ENCODE measurements at regions of chr1 and their contacts with region 1.

Region 1: DNA sequence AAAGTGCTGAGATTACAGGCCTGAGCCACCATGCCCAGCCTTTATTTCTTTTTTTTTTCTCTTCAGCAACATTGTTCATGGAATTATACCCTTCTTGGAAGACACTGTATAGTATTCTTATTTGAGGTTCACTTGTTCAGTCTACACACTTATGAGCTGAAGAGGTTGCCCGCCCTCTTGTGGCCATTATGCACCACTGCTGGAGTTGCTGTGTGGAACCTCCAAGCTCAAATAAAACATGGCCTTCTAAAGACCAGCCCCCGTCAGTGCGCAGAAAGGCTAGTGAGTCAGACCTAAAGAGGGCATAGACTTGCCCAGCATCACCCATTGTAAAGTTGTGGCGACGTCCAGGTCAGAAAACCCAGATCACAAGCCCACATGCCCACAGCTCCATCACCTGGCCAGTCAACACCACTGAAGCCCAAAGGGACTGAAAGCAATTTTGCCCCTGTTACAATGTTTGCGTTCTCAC is 20.4 kb downstream of the LURAP1 start:
- DNase-seq: peak; percentile 37 to 84
- ATAC-seq: peak; percentile 90 to 99 (median 97)
- H3K4me3 ChIP-seq: no peak overlapping the region
- H3K4me3 Mint-ChIP-seq: no peak overlapping the region
- H3K27ac ChIP-seq: no peak overlapping the region
- H3K27ac Mint-ChIP-seq: no peak overlapping the region
- H3K4me1 ChIP-seq: peaks cover 3% of the 10 kb centered on the region
- H3K4me1 Mint-ChIP-seq: peaks cover 0 to 5% of the 10 kb centered on the region in 2 donors
- H3K27me3 ChIP-seq: no peaks in the 10 kb centered on the region
- H3K27me3 Mint-ChIP-seq: no peaks in the 10 kb centered on the region
- CTCF ChIP-seq: peak; percentile 87

Region 2: GRCh38 chr1:45884700-45885099 is 338.8 kb before region 1 on chr1:
- intact Hi-C with region 1: no loop called
- DNase-seq: no peak
- ATAC-seq: no peak
- H3K4me3 ChIP-seq: no peak overlapping the region
- H3K4me3 Mint-ChIP-seq: no peak overlapping the region
- H3K27ac ChIP-seq: no peak overlapping the region
- H3K27ac Mint-ChIP-seq: no peak overlapping the region
- H3K4me1 ChIP-seq: no peaks in the 10 kb centered on the region
- H3K4me1 Mint-ChIP-seq: no peaks in the 10 kb centered on the region
- H3K27me3 ChIP-seq: no peaks in the 10 kb centered on the region
- H3K27me3 Mint-ChIP-seq: no peaks in the 10 kb centered on the region
- CTCF ChIP-seq: no peak

Region 3: GRCh38 chr1:46036894-46037839 is 186.3 kb before region 1 on chr1:
- intact Hi-C with region 1: loop called (anchors 1 kb)
- DNase-seq: peak; percentile 80 to 90
- ATAC-seq: peak; percentile 81 to 92 (median 90)
- H3K4me3 ChIP-seq: no peak overlapping the region
- H3K4me3 Mint-ChIP-seq: no peak overlapping the region
- H3K27ac ChIP-seq: no peak overlapping the region
- H3K27ac Mint-ChIP-seq: no peak overlapping the region
- H3K4me1 ChIP-seq: peaks cover 9% of the 10 kb centered on the region
- H3K4me1 Mint-ChIP-seq: no peaks in the 10 kb centered on the region
- H3K27me3 ChIP-seq: no peaks in the 10 kb centered on the region
- H3K27me3 Mint-ChIP-seq: no peaks in the 10 kb centered on the region
- CTCF ChIP-seq: peak; percentile 97

Region 4: DNA sequence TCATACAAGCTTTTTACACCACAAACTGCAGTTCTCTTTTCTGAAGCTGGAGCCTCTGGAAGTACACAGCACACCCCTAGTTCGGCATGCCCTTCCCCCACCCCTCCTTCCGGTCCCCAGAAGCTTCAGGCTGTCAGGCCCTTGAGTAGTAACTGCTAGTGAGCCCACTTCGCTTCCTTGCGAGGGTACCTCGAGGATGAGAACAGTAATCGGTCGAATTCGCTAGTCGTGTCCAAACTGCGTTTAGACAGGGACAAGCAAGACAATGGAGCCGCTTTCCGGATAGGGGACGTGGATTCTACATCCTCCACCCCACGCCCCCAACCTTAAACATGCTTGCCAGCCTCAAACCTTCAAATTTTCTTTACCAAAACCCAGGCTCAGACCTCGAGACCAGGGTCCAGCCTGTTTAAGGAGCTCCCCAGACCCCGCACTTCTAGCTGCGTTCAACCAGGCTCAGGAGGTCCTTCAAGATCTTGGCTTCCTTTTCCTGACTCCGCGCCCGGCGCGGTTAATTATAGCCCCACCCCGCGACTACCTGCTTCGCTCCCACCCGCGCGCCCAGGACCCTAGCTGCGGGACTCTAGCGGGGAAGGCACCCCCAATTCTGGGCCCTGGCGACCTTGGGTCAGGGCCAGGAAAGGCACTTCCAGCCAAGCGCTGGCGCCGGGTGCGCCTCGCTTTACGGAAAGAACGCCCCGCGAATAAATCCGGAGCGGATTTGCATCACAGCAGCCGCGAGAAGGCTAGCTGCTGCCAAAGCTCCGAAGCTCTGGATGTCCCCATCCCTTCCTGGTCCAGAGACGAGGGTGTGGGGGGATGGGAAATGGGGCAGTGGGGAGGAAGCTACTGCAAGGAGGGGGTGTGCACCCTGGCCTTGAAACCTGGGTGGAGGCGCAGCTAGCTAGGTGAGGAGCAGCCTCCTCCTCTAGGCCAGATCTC is 56.7 kb before region 1 on chr1:
- intact Hi-C with region 1: no loop called
- DNase-seq: peak; percentile 30 to 70
- ATAC-seq: peak; percentile 59 to 75 (median 67)
- H3K4me3 ChIP-seq: peak overlapping the region; percentile 46
- H3K4me3 Mint-ChIP-seq: peak overlapping the region; percentile 93
- H3K27ac ChIP-seq: peak overlapping the region; percentile 17
- H3K27ac Mint-ChIP-seq: peak overlapping the region; percentile 46 to 94
- H3K4me1 ChIP-seq: peaks cover 15% of the 10 kb centered on the region
- H3K4me1 Mint-ChIP-seq: peaks cover 13 to 19% of the 10 kb centered on the region in 2 donors
- H3K27me3 ChIP-seq: no peaks in the 10 kb centered on the region
- H3K27me3 Mint-ChIP-seq: peaks cover 0 to 2% of the 10 kb centered on the region in 2 donors
- CTCF ChIP-seq: no peak

Region 5: GRCh38 chr1:46179138-46180081 is 44.1 kb before region 1 on chr1:
- intact Hi-C with region 1: loop called (anchors 2 kb)
- DNase-seq: peak; percentile 56 to 85
- ATAC-seq: peak; percentile 68 to 72 (median 68)
- H3K4me3 ChIP-seq: no peak overlapping the region
- H3K4me3 Mint-ChIP-seq: no peak overlapping the region
- H3K27ac ChIP-seq: no peak overlapping the region
- H3K27ac Mint-ChIP-seq: no peak overlapping the region
- H3K4me1 ChIP-seq: peaks cover 14% of the 10 kb centered on the region
- H3K4me1 Mint-ChIP-seq: peaks cover 8% of the 10 kb centered on the region in 2 donors
- H3K27me3 ChIP-seq: no peaks in the 10 kb centered on the region
- H3K27me3 Mint-ChIP-seq: no peaks in the 10 kb centered on the region
- CTCF ChIP-seq: peak; percentile 90

Region 6: DNA sequence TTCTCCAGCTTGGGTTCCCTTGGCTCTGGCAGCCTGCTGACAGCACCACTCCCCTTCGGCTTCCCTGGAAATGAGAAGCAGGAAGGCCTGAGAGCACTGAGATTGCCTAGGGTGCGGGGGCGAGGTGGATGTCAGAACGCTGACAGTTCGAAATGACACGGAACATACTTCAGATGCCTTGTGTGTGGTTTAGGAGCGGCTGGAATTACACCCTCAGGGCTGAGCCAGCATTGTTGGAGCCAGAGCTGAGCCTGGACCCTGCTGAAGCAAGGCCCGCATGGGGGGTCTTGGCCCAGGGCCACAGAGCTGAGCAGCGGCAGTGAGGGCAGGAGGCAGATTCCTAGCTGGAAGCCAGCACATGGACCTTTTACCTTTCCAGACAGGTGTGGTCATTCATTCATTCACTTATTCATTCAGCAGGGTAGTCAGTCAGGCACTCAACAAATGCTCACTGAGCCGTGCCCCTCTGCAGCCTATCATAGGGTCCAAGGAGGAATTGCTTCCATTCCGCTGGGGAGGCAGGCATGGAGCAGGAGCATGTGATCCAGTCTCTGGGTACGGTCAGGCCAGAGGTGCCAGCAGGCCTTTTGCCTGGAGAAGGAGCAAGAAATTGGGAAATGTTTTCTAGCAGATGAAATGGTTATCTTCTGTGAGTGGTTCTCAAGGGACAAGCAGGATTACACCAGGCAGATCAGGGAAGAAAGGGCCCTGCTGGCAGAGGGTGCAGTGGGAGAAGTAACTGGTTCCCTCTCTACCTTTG is 1186.0 kb after region 1 on chr1:
- intact Hi-C with region 1: no loop called
- DNase-seq: no peak
- ATAC-seq: no peak
- H3K4me3 ChIP-seq: no peak overlapping the region
- H3K4me3 Mint-ChIP-seq: no peak overlapping the region
- H3K27ac ChIP-seq: no peak overlapping the region
- H3K27ac Mint-ChIP-seq: no peak overlapping the region
- H3K4me1 ChIP-seq: no peaks in the 10 kb centered on the region
- H3K4me1 Mint-ChIP-seq: no peaks in the 10 kb centered on the region
- H3K27me3 ChIP-seq: peaks cover 4% of the 10 kb centered on the region
- H3K27me3 Mint-ChIP-seq: peaks cover 8 to 13% of the 10 kb centered on the region in 2 donors
- CTCF ChIP-seq: no peak